Dorsolateral prefrontal cortex (tissue), 120 donors: ENCODE measurements at regions of chr14 and their contacts with region 1.

Region 1: GRCh38 chr14:50773632-50774541 is 57.1 kb downstream of the NIN start:
- DNase-seq: peak in 7 of 10 donors; percentile 35 to 71 (median 58)
- H3K4me3 ChIP-seq: no peak overlapping the region
- H3K27ac ChIP-seq: peak overlapping the region in 34 of 59 donors; percentile 3 to 63 (median 28)
- H3K27me3 ChIP-seq: no peaks in the 10 kb centered on the region
- CTCF ChIP-seq: peak; percentile 16 to 95 (median 80)

Region 2: GRCh38 chr14:50311975-50312733 is 461.7 kb before region 1 on chr14 and contains the starts of genes DMAC2L and L2HGDH:
- intact Hi-C with region 1: loop called in 1 of 2 experiments (anchors 10 kb)
- DNase-seq: peak; percentile 89 to 97 (median 94)
- H3K4me3 ChIP-seq: peak within 1 kb of the TSS; percentile 65 to 100 (median 91)
- H3K27ac ChIP-seq: peak within 1 kb of the TSS; percentile 58 to 96 (median 93)
- H3K27me3 ChIP-seq: no peaks in the 10 kb centered on the region
- CTCF ChIP-seq: peak in 40 of 56 donors; percentile 1 to 55 (median 32)
- total RNA-seq, gene DMAC2L: 12.3 to 38.0 (median 23.5) TPM
- total RNA-seq, gene L2HGDH: 8.9 to 22.1 (median 15.0) TPM

Region 3: GRCh38 chr14:50321009-50321660 is 452.8 kb before region 1 on chr14:
- intact Hi-C with region 1: loop called (anchors 5 to 10 kb)
- DNase-seq: peak in 8 of 10 donors; percentile 56 to 77 (median 66)
- H3K4me3 ChIP-seq: peak overlapping the region in 54 of 59 donors; percentile 2 to 61 (median 34)
- H3K27ac ChIP-seq: peak overlapping the region; percentile 12 to 91 (median 78)
- H3K27me3 ChIP-seq: no peaks in the 10 kb centered on the region
- CTCF ChIP-seq: peak; percentile 73 to 93 (median 86)

Region 4: DNA sequence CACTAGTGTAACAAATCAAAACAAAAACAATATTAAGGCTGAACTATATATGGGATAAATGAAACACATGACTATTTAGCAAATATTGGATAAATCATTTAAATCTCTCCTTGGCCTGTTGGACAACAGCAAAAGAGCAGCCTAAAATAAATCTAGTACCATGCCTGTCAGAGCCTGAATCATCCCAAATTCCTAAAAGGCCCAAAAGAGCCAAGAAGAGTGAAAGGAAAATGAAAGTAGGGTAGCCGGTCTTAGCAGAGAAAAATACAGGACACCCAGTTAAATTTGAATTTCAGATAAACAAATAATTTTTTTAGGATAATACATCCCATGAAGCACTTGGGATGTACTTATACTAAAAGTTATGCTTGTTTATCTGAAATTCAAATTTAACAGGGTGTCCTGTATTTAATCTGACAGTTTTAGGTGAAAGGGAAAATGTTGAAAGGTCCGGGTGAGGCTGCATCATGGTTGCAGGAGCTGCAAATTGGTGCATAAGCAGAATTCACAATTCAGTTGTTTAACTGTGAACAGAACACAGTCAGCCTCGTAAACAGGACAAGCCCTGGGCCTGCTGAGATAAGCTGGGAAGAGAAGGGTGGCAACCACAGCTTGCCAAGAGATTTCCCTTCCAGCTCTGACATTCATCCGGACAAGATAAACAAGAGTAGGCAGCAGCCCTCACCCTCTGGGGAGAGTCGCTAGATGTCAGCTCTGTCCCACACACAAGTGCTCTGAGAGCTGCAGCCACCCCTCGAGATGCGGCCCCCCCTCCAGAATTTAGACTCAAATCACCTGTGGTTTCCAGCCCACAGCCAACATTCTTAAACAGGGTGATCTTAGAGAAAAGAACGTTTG is 431.4 kb before region 1 on chr14:
- intact Hi-C with region 1: loop called in 1 of 2 experiments (anchors 10 kb)
- DNase-seq: peak; percentile 54 to 86 (median 80)
- H3K4me3 ChIP-seq: peak overlapping the region in 57 of 59 donors; percentile 5 to 59 (median 32)
- H3K27ac ChIP-seq: peak overlapping the region in 58 of 59 donors; percentile 7 to 92 (median 80)
- H3K27me3 ChIP-seq: no peaks in the 10 kb centered on the region
- CTCF ChIP-seq: peak; percentile 25 to 79 (median 58)

Region 5: GRCh38 chr14:50542941-50543418 is 230.9 kb before region 1 on chr14:
- intact Hi-C with region 1: loop called in 1 of 2 experiments (anchors 5 kb)
- DNase-seq: peak in 2 of 10 donors; percentile 41 to 42
- H3K4me3 ChIP-seq: no peak overlapping the region
- H3K27ac ChIP-seq: peak overlapping the region in 9 of 59 donors; percentile 17 to 44 (median 28)
- H3K27me3 ChIP-seq: no peaks in the 10 kb centered on the region
- CTCF ChIP-seq: peak; percentile 33 to 79 (median 64)

Region 6: GRCh38 chr14:50599700-50600444 is 174.0 kb before region 1 on chr14:
- intact Hi-C with region 1: loop called (anchors 5 kb)
- DNase-seq: no peak
- H3K4me3 ChIP-seq: no peak overlapping the region
- H3K27ac ChIP-seq: peak overlapping the region in 45 of 59 donors; percentile 3 to 83 (median 62)
- H3K27me3 ChIP-seq: no peaks in the 10 kb centered on the region
- CTCF ChIP-seq: peak; percentile 43 to 88 (median 70)